OCI-LY7 (cell line): ENCODE measurements at regions of chr9 and their contacts with region 1.

Region 1: GRCh38 chr9:38352530-38353328 is 39.8 kb upstream of the ALDH1B1 start:
- DNase-seq: no peak
- H3K4me3 ChIP-seq: no peak overlapping the region
- H3K27ac ChIP-seq: no peak overlapping the region
- H3K4me1 ChIP-seq: no peaks in the 10 kb centered on the region
- CTCF ChIP-seq: no peak

Region 2: DNA sequence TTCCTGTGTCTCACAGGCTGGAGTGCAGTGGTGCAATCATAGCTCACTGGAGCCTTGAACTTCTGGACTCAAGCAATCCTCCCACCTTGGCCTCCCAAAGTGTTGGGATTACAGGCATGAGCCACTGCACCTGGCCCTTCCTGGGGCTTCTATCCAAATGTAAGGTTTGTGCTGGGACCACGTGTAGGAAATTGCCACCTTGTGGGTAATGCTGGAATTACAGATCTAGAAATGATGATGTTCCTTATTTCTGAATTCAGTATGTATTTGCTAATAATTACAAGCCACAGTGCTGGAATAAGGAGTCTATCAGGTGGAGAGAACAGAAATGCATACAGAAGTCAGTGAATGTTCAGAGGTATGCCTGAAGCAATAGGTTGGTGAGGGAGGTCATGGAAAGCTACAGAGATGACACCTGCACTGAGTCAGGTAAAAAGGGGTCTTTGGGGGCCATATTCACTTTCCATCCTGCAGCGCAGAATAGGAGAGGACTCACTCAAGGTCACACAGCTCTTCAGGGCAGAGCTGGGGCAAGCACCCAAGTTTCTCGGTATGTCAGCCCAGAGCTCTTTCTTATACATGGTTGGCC is 80.3 kb after region 1 on chr9:
- CTCF ChIA-PET with region 1: no interaction called
- POLR2A ChIA-PET with region 1: no interaction called
- intact Hi-C with region 1: loop called (anchors 5 kb)
- DNase-seq: peak; percentile 45
- H3K4me3 ChIP-seq: no peak overlapping the region
- H3K27ac ChIP-seq: no peak overlapping the region
- H3K4me1 ChIP-seq: no peaks in the 10 kb centered on the region
- CTCF ChIP-seq: peak; percentile 72

Region 3: DNA sequence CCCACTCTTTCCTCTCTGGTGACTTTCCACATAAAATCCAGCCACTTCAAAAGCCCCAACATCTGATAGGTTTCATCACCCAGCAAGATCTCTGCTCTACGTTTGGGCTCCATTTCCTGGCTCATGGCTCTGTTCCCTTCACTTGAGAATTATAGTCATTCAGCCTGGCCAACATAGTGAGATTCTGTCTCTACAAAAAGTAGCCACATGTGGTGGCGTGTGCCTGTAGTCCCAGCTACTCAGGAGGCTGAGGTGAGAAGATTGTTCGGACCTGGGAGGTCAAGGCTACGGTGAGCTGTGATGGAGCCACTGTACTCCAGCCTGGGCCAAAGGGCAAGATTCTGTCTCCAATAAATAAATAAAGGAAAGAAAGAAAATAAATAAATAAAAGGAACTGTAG is 154.9 kb after region 1 on chr9:
- CTCF ChIA-PET with region 1: no interaction called
- POLR2A ChIA-PET with region 1: no interaction called
- intact Hi-C with region 1: no loop called
- DNase-seq: no peak
- H3K4me3 ChIP-seq: no peak overlapping the region
- H3K27ac ChIP-seq: no peak overlapping the region
- H3K4me1 ChIP-seq: no peaks in the 10 kb centered on the region
- CTCF ChIP-seq: no peak